Transverse colon (tissue), 4 donors: ENCODE measurements at regions of chr11 and their contacts with region 1.

Region 1: GRCh38 chr11:56841210-56841810 is 92.8 kb upstream of the OR9G4 start:
- DNase-seq: peak; percentile 57
- H3K4me3 ChIP-seq: no peak overlapping the region
- H3K27ac ChIP-seq: no peak overlapping the region
- H3K4me1 ChIP-seq: peaks cover 0 to 5% (median 3%) of the 10 kb centered on the region in 4 donors
- H3K27me3 ChIP-seq: no peaks in the 10 kb centered on the region
- CTCF ChIP-seq: peak; percentile 54 to 74 (median 68)
- EP300 ChIP-seq: no peak
- POLR2A ChIP-seq: no peak

Region 2: GRCh38 chr11:56783448-56784041 is 57.8 kb before region 1 on chr11:
- in situ Hi-C with region 1: no loop called
- intact Hi-C with region 1: no loop called
- DNase-seq: no peak
- H3K4me3 ChIP-seq: peak overlapping the region in 1 of 4 donors; percentile 6
- H3K27ac ChIP-seq: no peak overlapping the region
- H3K4me1 ChIP-seq: peaks cover 0 to 5% (median 0%) of the 10 kb centered on the region in 4 donors
- H3K27me3 ChIP-seq: no peaks in the 10 kb centered on the region
- CTCF ChIP-seq: peak; percentile 54 to 64 (median 59)
- EP300 ChIP-seq: no peak
- POLR2A ChIP-seq: no peak

Region 3: GRCh38 chr11:57085611-57086010 is 244.3 kb after region 1 on chr11:
- in situ Hi-C with region 1: no loop called
- intact Hi-C with region 1: loop called (anchors 5 kb)
- DNase-seq: no peak
- H3K4me3 ChIP-seq: no peak overlapping the region
- H3K27ac ChIP-seq: no peak overlapping the region
- H3K4me1 ChIP-seq: no peaks in the 10 kb centered on the region
- H3K27me3 ChIP-seq: no peaks in the 10 kb centered on the region
- CTCF ChIP-seq: no peak
- EP300 ChIP-seq: no peak
- POLR2A ChIP-seq: no peak

Region 4: DNA sequence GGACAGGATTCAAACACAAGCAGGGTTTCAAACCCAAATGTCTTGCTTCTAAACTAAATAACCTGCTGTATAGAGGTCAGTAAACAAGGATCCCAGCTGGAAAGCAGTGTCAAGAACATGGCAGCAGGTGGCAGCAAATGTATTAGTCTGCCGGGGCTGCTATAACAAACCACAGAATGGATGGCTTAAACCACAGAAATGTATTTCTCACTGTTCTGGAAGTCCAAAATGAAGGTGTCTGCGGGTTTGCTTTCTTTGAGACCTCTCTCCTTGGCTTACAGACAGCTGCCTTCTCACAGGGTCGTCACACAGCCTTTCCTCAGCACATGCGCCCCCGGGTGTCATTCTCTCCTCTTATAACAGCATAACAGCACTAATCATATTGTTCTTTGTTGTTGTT is 275.3 kb after region 1 on chr11:
- in situ Hi-C with region 1: loop called in 2 of 4 experiments (anchors 10 to 25 kb)
- intact Hi-C with region 1: no loop called
- DNase-seq: peak; percentile 38
- H3K4me3 ChIP-seq: no peak overlapping the region
- H3K27ac ChIP-seq: no peak overlapping the region
- H3K4me1 ChIP-seq: no peaks in the 10 kb centered on the region
- H3K27me3 ChIP-seq: no peaks in the 10 kb centered on the region
- CTCF ChIP-seq: peak; percentile 28 to 49 (median 39)
- EP300 ChIP-seq: no peak
- POLR2A ChIP-seq: no peak

Region 5: GRCh38 chr11:57124917-57125316 is 283.6 kb after region 1 on chr11:
- in situ Hi-C with region 1: loop called in 2 of 4 experiments (anchors 10 to 25 kb)
- intact Hi-C with region 1: no loop called
- DNase-seq: no peak
- H3K4me3 ChIP-seq: no peak overlapping the region
- H3K27ac ChIP-seq: no peak overlapping the region
- H3K4me1 ChIP-seq: no peaks in the 10 kb centered on the region
- H3K27me3 ChIP-seq: no peaks in the 10 kb centered on the region
- CTCF ChIP-seq: no peak
- EP300 ChIP-seq: no peak
- POLR2A ChIP-seq: no peak

Region 6: GRCh38 chr11:57463671-57464538 is 622.6 kb after region 1 on chr11:
- in situ Hi-C with region 1: no loop called
- intact Hi-C with region 1: no loop called
- DNase-seq: no peak
- H3K4me3 ChIP-seq: no peak overlapping the region
- H3K27ac ChIP-seq: no peak overlapping the region
- H3K4me1 ChIP-seq: peaks cover 9 to 22% (median 21%) of the 10 kb centered on the region in 4 donors
- H3K27me3 ChIP-seq: peaks cover 35% of the 10 kb centered on the region
- CTCF ChIP-seq: no peak
- EP300 ChIP-seq: no peak
- POLR2A ChIP-seq: no peak